Left lung (tissue), 14 donors: ENCODE measurements at regions of chr10 and their contacts with region 1.

Region 1: DNA sequence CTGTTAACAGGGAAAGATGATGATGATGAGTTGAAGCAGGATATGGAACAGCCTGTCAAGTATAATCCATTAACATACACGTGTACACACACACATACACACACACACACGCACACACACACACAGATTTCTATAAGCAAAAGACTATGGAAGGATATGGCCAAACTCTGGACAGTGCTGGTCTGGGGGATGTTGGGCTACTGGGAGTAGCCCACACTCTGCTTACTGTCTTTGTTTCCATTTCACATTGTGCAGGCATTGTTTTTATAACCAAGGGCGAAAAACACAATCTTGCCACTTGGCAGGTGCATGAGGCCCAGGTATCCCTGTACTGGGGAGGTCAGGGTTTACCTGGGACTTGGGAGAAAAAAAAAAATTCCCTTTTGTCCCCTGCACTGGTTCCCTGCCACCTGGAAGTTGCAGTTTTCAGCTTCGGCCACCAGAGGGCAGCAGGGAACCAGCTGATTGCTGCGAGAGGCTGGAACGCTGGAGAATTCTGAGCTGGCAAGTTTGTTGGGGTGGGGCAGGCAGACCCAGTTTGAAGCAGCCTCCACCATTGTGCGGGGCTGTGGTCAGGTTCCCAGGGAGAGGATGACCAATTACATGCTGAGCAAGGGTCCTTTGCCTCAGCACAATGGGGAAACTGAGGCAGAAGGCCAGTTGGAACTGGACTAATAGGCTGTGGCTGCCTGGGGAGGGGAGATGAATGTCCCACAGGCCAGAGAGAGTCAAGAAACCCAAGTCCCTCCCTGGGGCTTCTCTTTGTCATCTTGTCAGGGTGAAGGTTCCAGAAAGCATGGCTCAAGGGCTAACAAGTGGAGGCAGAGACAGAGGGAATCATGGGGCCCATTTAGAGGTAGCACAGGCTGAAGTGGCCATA is 27.3 kb downstream of the PPIF start:
- DNase-seq: peak; percentile 69 to 93 (median 84)
- ATAC-seq: peak; percentile 95
- H3K4me3 ChIP-seq: no peak overlapping the region
- H3K27ac ChIP-seq: no peak overlapping the region
- H3K4me1 ChIP-seq: peaks cover 0 to 3% of the 10 kb centered on the region in 2 donors
- H3K27me3 ChIP-seq: no peaks in the 10 kb centered on the region
- CTCF ChIP-seq: peak; percentile 98 to 99

Region 2: GRCh38 chr10:79468024-79468560 is 93.5 kb after region 1 on chr10:
- intact Hi-C with region 1: loop called in 1 of 2 experiments (anchors 5 kb)
- DNase-seq: no peak
- ATAC-seq: peak; percentile 40
- H3K4me3 ChIP-seq: no peak overlapping the region
- H3K27ac ChIP-seq: peak overlapping the region; percentile 35 to 44
- H3K4me1 ChIP-seq: peaks cover 0 to 14% of the 10 kb centered on the region in 2 donors
- H3K27me3 ChIP-seq: no peaks in the 10 kb centered on the region
- CTCF ChIP-seq: no peak

Region 3: GRCh38 chr10:79559726-79560125 is 185.2 kb after region 1 on chr10:
- intact Hi-C with region 1: no loop called
- DNase-seq: no peak
- ATAC-seq: peak; percentile 4
- H3K4me3 ChIP-seq: peak overlapping the region; percentile 0 to 3
- H3K27ac ChIP-seq: peak overlapping the region; percentile 41 to 56
- H3K4me1 ChIP-seq: no peaks in the 10 kb centered on the region
- H3K27me3 ChIP-seq: no peaks in the 10 kb centered on the region
- CTCF ChIP-seq: no peak